Transverse colon (tissue), 4 donors: ENCODE measurements at regions of chr20 and their contacts with region 1.

Region 1: GRCh38 chr20:52127309-52127708 is 64.3 kb downstream of the ZFP64 start:
- DNase-seq: no peak
- H3K4me3 ChIP-seq: no peak overlapping the region
- H3K27ac ChIP-seq: no peak overlapping the region
- H3K4me1 ChIP-seq: no peaks in the 10 kb centered on the region
- H3K27me3 ChIP-seq: no peaks in the 10 kb centered on the region
- CTCF ChIP-seq: no peak
- EP300 ChIP-seq: no peak
- POLR2A ChIP-seq: no peak

Region 2: GRCh38 chr20:51647674-51648570 is 479.4 kb before region 1 on chr20:
- in situ Hi-C with region 1: no loop called
- intact Hi-C with region 1: loop called (anchors 5 kb)
- DNase-seq: no peak
- H3K4me3 ChIP-seq: no peak overlapping the region
- H3K27ac ChIP-seq: no peak overlapping the region
- H3K4me1 ChIP-seq: no peaks in the 10 kb centered on the region
- H3K27me3 ChIP-seq: no peaks in the 10 kb centered on the region
- CTCF ChIP-seq: no peak
- EP300 ChIP-seq: no peak
- POLR2A ChIP-seq: no peak

Region 3: DNA sequence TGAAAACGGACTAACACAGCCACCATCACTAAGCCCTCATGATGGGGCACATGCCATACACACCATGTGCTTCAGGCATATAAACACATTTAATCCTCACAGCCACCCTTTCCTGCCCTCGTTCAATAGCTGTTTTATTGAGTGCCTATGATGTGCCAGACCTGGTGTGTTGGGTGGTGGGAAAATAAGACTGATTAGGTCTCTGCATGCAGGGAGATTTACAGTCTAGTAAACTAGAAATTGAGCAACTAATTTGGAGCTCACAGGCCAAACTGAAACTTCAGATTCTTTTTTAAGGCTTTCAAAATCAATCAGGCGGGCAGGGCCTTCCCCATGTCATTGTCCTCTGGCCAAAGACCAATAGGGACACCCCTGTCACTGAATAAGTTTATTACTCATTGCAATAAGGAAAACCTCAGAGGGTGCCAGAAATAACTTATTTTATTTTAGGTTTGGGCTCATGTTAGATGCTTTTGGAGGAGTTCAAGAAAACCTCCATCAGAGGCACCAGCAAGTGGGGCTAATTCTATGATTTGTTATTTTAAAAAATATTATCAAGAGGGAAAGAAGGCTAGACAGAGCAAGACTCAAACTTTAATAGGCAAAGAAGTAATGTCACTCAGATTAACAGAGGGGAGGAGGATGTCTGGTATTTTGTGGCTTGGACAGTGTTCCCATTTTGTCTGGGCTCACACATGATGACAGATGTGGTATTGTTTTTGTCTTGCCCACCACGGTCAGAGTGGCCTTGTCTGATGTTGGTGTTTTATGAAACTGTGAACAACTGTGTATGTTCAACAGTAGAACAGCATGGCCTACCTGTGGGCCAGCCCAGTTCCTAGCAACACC is 52.2 kb after region 1 on chr20:
- in situ Hi-C with region 1: no loop called
- intact Hi-C with region 1: no loop called
- DNase-seq: no peak
- H3K4me3 ChIP-seq: no peak overlapping the region
- H3K27ac ChIP-seq: no peak overlapping the region
- H3K4me1 ChIP-seq: no peaks in the 10 kb centered on the region
- H3K27me3 ChIP-seq: no peaks in the 10 kb centered on the region
- CTCF ChIP-seq: no peak
- EP300 ChIP-seq: no peak
- POLR2A ChIP-seq: no peak